Esophagus muscularis mucosa (tissue), 4 donors: ENCODE measurements at regions of chr10 and their contacts with region 1.

Region 1: DNA sequence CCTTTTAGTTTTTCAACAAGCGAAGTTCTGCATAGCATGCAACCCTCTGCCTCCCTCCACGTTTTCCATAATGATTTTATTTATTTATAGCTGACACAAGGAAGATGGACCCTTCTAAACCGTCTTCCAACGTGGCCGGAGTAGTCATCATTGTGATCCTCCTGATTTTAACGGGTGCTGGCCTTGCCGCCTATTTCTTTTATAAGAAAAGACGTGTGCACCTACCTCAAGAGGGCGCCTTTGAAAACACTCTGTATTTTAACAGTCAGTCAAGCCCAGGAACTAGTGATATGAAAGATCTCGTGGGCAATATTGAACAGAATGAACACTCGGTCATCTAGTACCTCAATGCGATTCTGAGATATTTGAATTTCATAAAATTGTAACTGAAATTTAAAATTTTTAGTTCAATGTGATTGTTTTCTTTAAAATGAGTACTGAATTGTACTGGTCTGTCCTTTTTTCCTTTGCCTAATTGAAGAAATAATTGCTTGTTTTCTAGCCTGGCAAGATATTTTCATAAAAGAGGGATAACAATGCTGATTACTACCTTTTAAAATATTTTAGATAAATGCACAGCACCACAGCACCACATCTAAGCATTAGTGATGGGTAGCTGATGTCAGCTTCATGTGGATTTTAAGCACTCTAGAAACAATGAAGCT is 41.5 kb upstream of the SLC39A12 start:
- DNase-seq: no peak
- H3K4me3 ChIP-seq: no peak overlapping the region
- H3K27ac ChIP-seq: no peak overlapping the region
- H3K4me1 ChIP-seq: peaks cover 0 to 46% (median 33%) of the 10 kb centered on the region in 4 donors
- H3K27me3 ChIP-seq: no peaks in the 10 kb centered on the region
- CTCF ChIP-seq: peak; percentile 59 to 68 (median 59)
- EP300 ChIP-seq: no peak
- POLR2A ChIP-seq: no peak

Region 2: DNA sequence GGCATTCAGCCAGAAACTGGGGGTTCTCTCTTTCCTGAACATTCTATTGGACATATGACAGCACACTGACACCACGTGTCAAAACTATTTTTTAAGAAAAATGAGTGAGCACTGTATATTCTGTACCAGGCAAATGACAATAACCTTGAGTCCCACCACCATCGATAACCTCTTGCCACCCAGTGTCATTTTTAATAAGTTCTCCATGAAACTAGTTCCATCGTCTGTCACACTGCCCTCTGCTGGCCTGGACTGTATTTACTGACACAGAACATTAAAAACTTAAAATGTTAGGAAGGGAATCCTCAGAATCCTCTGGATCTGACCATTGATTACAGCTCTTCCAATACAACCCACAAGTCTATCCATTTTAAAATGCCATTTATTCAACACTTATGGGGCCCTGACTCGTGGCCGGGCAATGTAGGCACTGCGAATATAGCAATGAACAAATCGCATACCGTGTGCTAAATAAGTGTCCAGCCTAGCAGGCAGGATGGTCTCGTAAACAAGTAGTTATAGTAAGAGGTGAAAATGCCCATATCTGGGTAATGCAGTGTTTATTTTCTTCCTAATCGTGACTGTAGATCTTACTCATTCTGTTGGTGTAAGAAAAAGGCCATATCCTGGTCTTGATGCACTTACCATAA is 194.1 kb after region 1 on chr10:
- intact Hi-C with region 1: loop called (anchors 10 kb)
- DNase-seq: no peak
- H3K4me3 ChIP-seq: no peak overlapping the region
- H3K27ac ChIP-seq: no peak overlapping the region
- H3K4me1 ChIP-seq: peaks cover 0 to 20% (median 0%) of the 10 kb centered on the region in 4 donors
- H3K27me3 ChIP-seq: no peaks in the 10 kb centered on the region
- CTCF ChIP-seq: peak; percentile 47 to 71 (median 57)
- EP300 ChIP-seq: no peak
- POLR2A ChIP-seq: no peak

Region 3: GRCh38 chr10:18140149-18140956 is 230.1 kb after region 1 on chr10 and contains the start of gene CACNB2:
- intact Hi-C with region 1: loop called (anchors 10 kb)
- DNase-seq: no peak
- H3K4me3 ChIP-seq: peak within 1 kb of the TSS; percentile 76 to 88 (median 82)
- H3K27ac ChIP-seq: peak within 1 kb of the TSS; percentile 96 to 98 (median 97)
- H3K4me1 ChIP-seq: peaks cover 20 to 42% (median 41%) of the 10 kb centered on the region in 4 donors
- H3K27me3 ChIP-seq: peaks cover 0 to 14% (median 0%) of the 10 kb centered on the region in 4 donors
- CTCF ChIP-seq: peak; percentile 8 to 22 (median 11)
- EP300 ChIP-seq: no peak
- POLR2A ChIP-seq: peak; percentile 26
- total RNA-seq, gene CACNB2: 73.5 to 108 (median 87.2) TPM

Region 4: GRCh38 chr10:18214691-18215563 is 304.7 kb after region 1 on chr10:
- intact Hi-C with region 1: loop called (anchors 5 kb)
- DNase-seq: no peak
- H3K4me3 ChIP-seq: peak overlapping the region in 1 of 4 donors; percentile 16
- H3K27ac ChIP-seq: peak overlapping the region in 2 of 4 donors; percentile 10 to 21
- H3K4me1 ChIP-seq: peaks cover 14 to 93% (median 91%) of the 10 kb centered on the region in 4 donors
- H3K27me3 ChIP-seq: no peaks in the 10 kb centered on the region
- CTCF ChIP-seq: peak; percentile 78 to 86 (median 84)
- EP300 ChIP-seq: no peak
- POLR2A ChIP-seq: no peak